Activated naive CD4-positive, alpha-beta T cell treated with anti-CD3 and anti-CD28 coated beads, Interleukin-2, amount 10 ng/mL, durations not matched to agents 7 days and 5 days (primary cell): ENCODE measurements at regions of chr3 and their contacts with region 1.

Region 1: DNA sequence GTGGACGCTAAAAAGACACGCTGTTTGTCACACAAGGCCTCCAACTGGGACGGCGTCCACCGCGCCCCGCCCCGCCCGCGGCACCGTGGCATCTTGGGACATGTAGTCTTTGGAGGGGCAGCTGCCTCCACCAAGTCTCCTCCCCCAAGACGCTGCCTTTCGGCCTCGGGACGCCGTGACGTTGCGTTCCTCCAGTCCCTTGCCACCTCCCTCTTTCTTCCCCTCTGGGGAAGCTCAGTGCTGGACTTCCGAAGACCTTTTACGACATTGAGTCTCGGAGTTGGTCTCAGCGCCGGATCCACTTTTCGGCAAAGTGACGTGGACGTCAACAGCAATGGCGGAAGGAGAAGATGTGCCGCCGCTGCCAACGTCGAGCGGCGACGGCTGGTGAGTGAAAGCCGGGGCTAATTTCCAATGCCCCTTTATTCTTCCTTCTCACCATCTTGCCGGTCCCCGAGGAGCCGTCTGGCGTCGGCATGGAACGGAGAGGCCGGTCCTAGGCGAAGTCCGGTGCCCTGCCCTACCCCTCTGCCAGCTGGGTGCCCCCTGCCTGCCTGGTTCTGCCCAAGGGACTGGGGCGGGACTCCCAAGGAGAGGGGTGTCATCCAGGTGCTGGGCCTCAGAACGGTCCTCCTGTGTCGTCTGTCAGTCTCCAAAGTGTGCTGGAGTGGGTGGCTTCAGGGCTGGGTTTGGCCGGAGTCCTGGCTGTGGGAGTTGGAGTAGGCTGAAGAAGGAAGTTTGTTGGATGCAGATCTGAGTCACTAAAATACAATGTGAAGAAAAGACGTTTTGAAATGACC is at the start of gene TBC1D23:
- DNase-seq: peak; percentile 99
- H3K4me3 Mint-ChIP-seq: peak within 1 kb of the TSS; percentile 92
- H3K27ac Mint-ChIP-seq: peak within 1 kb of the TSS; percentile 92
- H3K4me1 Mint-ChIP-seq: peaks cover 50% of the 10 kb centered on the region
- H3K27me3 Mint-ChIP-seq: no peaks in the 10 kb centered on the region

Region 2: DNA sequence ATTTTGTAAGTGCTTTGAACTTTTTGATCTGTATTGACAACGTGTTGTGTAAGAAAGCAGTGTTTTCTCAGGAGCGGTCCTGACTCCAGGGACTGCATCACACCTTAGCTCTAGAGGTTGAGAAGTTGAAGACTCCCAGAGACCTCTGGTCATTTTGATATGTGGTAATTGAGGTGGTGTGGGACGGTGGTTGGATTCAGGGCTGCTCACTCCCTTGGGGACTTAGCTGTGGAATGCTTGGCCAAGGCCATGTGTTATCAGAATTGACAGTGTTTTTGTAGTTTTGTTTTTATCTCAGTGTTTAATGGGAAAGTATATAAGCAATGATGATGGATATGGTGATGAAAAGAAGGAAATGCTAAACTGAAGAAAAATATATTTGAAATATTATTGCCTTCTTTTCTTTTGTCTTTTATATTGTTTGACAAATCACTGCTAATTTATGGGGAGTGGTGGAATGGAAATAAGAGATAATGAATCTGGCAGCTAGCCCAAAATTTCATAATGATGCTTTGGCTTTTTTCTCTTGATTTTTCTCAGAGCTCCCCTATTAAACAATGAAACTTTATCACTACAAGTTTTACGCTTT is 427.2 kb before region 1 on chr3:
- CTCF ChIA-PET with region 1: interaction called, 15 read pairs
- DNase-seq: no peak
- H3K4me3 Mint-ChIP-seq: no peak overlapping the region
- H3K27ac Mint-ChIP-seq: no peak overlapping the region
- H3K4me1 Mint-ChIP-seq: no peaks in the 10 kb centered on the region
- H3K27me3 Mint-ChIP-seq: no peaks in the 10 kb centered on the region

Region 3: DNA sequence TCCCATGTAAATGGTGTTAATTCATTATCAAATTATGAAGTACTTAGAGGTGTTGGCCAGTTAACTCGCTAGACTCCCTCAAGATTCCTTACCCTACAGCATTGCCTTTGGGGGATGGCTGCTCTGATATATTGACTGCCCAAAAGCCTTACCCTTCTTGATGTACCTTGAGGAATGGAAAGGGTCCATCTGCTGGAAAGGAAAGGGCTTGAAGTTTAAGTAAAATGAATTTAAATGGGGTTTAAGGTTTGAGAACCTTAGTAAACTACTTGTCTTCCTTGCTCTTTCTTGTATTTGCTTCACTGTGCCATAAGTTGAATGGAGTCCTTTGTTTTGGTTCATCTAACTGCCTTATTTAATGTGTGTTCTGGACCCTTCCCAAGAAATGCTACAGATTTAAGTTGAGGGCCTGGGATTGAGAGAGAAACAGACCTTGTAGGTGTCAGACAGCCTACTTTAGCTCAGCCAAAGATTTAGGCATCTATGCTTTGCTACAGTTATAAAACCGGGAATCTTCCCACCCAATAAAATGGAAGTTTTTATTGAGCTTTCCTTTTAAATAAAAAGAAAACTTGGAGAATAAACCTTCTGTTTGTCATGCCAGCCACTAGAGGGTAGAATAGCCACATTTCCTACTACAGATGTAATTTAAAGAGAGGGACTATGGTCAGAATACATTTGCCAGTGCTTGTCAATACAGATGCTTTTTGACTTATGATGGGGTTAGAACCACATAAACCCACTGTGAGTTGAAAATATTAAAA is 417.9 kb before region 1 on chr3:
- CTCF ChIA-PET with region 1: interaction called, 11 read pairs
- DNase-seq: no peak
- H3K4me3 Mint-ChIP-seq: no peak overlapping the region
- H3K27ac Mint-ChIP-seq: no peak overlapping the region
- H3K4me1 Mint-ChIP-seq: no peaks in the 10 kb centered on the region
- H3K27me3 Mint-ChIP-seq: no peaks in the 10 kb centered on the region

Region 4: DNA sequence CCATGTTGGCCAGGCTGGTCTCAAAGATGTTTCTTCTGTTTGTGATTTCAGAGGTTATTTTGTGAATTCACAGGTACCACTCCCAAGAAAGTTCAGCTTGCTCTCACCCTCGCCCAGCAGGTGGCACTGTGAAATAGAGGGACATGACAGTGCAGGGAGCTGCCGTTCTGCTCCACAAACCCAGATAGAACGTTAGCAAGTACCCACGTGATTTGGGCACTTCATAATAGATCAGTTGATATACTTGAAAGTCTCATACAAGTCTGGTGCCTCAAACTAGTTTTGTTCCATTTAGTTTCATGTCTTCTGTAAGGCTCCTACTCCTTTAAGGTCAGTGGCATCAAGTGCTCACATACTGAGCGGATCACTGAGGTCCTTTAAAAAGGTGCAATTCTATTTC is 192.1 kb before region 1 on chr3:
- CTCF ChIA-PET with region 1: interaction called, 84 read pairs
- DNase-seq: peak; percentile 91
- H3K4me3 Mint-ChIP-seq: no peak overlapping the region
- H3K27ac Mint-ChIP-seq: peak overlapping the region; percentile 13
- H3K4me1 Mint-ChIP-seq: peaks cover 58% of the 10 kb centered on the region
- H3K27me3 Mint-ChIP-seq: no peaks in the 10 kb centered on the region